MCF 10A (cell line): ENCODE measurements at regions of chr1 and their contacts with region 1.

Region 1: DNA sequence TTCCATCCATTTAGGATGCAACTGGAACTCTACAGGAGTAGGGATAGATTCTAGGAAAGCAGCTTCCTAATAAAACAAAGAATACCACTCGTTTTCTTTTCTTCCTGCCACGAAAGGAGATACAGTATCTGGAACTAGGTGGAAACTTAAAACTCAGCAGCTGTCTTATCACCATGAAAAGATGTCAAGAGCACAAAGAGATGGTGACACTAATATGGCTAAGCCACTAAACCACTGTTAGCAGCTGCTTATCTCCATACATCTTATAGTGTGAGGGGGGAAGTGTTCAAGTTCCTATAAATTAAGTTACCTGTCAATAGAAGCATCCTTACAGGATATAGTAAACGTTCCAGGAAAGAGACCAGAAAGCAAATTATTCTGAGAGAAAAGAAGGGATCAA is 162.5 kb downstream of the TYW3 start:
- DNase-seq: no peak
- H3K4me3 Mint-ChIP-seq: no peak overlapping the region
- H3K27ac Mint-ChIP-seq: no peak overlapping the region
- H3K4me1 Mint-ChIP-seq: peaks cover 8% of the 10 kb centered on the region
- H3K27me3 Mint-ChIP-seq: no peaks in the 10 kb centered on the region
- CTCF ChIP-seq: no peak

Region 2: DNA sequence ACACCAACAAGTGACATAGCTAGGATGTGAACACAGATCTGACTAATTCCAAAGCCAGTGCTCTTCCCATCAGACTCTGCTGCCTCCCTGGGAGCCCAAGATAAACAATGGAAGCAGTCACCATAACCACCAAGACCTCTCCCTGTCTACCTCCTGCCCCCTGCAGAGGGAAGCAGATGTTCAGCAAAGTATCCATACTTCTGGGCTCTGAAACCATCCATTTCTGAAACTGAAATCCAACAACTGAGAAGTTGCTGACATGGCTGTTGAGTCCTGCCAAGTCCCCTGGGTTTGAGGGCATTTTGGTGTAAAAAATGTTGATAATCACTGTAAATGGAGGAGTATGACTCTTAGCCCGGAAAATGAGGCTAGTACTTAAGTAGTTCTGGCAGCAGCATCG is 60.4 kb before region 1 on chr1:
- CTCF ChIA-PET with region 1: no interaction called
- POLR2A ChIA-PET with region 1: no interaction called
- intact Hi-C with region 1: loop called (anchors 2 kb)
- DNase-seq: peak; percentile 11
- H3K4me3 Mint-ChIP-seq: no peak overlapping the region
- H3K27ac Mint-ChIP-seq: no peak overlapping the region
- H3K4me1 Mint-ChIP-seq: no peaks in the 10 kb centered on the region
- H3K27me3 Mint-ChIP-seq: peaks cover 23% of the 10 kb centered on the region
- CTCF ChIP-seq: no peak

Region 3: DNA sequence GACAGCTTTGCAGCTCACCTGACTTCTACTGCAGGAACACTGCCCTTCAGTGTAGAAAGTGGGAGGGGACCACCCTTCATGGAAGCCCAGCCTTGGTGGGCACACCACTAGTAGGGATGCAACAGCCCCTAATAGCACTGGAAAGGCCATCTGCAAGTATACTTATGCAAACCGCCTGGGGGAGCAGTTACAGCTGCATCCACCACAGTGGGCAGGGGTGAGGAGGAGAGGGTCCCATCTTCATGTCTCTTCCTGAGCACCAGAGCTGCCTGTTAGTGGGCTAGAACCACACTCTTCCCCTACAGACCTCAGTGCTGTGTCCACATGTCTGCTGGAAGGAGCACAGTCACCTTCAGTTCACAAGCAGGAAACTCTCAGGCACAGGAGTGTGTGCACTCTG is 172.6 kb after region 1 on chr1:
- CTCF ChIA-PET with region 1: no interaction called
- POLR2A ChIA-PET with region 1: no interaction called
- intact Hi-C with region 1: no loop called
- DNase-seq: no peak
- H3K4me3 Mint-ChIP-seq: no peak overlapping the region
- H3K27ac Mint-ChIP-seq: no peak overlapping the region
- H3K4me1 Mint-ChIP-seq: no peaks in the 10 kb centered on the region
- H3K27me3 Mint-ChIP-seq: no peaks in the 10 kb centered on the region
- CTCF ChIP-seq: no peak